A673 (cell line): ENCODE measurements at regions of chr7 and their contacts with region 1.

Region 1: DNA sequence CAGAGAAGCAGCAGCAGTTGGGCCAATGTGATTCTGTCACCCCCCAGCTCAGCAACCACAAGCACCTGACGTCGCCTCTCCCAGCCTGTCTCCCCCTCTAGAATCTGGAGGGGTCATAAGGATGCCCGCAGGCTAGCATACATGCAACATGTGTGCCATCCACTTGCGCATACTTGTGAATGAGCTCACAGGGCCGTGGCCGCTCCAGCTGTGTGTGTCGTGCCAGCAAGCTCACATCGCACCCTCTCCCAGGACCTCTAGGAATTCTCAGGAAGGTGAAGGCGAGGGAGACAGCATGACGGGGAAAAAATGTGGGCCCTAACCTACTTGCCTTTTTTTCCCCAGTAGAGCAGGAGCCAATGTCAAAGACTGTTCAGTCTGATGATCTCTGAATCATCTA is 80.3 kb downstream of the STRA8 start:
- DNase-seq: no peak
- H3K4me3 ChIP-seq: no peak overlapping the region
- H3K27ac ChIP-seq: no peak overlapping the region
- H3K4me1 ChIP-seq: no peaks in the 10 kb centered on the region
- H3K27me3 ChIP-seq: no peaks in the 10 kb centered on the region
- CTCF ChIP-seq: no peak

Region 2: GRCh38 chr7:135490783-135491182 is 176.8 kb after region 1 on chr7:
- CTCF ChIA-PET with region 1: no interaction called
- POLR2A ChIA-PET with region 1: interaction called, 10 read pairs
- intact Hi-C with region 1: no loop called
- DNase-seq: no peak
- H3K4me3 ChIP-seq: no peak overlapping the region
- H3K27ac ChIP-seq: no peak overlapping the region
- H3K4me1 ChIP-seq: no peaks in the 10 kb centered on the region
- H3K27me3 ChIP-seq: no peaks in the 10 kb centered on the region
- CTCF ChIP-seq: no peak